Natural killer cell (primary cell): ENCODE measurements at regions of chr5 and their contacts with region 1.

Region 1: DNA sequence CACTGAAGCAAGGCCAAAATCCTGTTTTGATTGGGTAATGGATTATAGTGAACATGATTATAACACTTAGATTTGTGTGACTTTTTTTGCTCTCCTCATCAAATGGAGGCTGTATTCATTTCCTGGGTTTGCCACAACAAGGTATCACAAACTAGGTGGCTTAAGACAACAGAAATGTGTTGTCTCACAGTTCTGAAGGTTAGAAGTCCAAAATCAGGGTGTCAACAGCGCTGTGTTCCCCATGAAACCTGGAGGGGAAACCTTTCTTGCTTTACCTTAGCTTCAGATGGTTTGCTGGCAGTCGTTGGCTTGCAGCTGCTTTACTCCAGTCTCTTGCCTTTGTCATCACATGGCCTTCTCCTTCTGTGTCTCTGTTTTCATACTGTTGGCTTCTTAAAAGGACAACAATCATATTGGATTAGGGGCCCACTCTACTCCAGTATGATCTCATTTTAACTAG is 32.4 kb downstream of the CDC42SE2 start:
- DNase-seq: peak in 1 of 2 donors; percentile 64
- ATAC-seq: peak; percentile 80 to 87 (median 82)
- H3K4me3 ChIP-seq: no peak overlapping the region
- H3K4me3 Mint-ChIP-seq: peak overlapping the region; percentile 68
- H3K27ac ChIP-seq: peak overlapping the region; percentile 41
- H3K27ac Mint-ChIP-seq: peak overlapping the region; percentile 86 to 90
- H3K4me1 ChIP-seq: peaks cover 40% of the 10 kb centered on the region
- H3K4me1 Mint-ChIP-seq: peaks cover 54 to 59% of the 10 kb centered on the region in 2 donors
- H3K27me3 ChIP-seq: no peaks in the 10 kb centered on the region
- H3K27me3 Mint-ChIP-seq: no peaks in the 10 kb centered on the region
- CTCF ChIP-seq: no peak

Region 2: DNA sequence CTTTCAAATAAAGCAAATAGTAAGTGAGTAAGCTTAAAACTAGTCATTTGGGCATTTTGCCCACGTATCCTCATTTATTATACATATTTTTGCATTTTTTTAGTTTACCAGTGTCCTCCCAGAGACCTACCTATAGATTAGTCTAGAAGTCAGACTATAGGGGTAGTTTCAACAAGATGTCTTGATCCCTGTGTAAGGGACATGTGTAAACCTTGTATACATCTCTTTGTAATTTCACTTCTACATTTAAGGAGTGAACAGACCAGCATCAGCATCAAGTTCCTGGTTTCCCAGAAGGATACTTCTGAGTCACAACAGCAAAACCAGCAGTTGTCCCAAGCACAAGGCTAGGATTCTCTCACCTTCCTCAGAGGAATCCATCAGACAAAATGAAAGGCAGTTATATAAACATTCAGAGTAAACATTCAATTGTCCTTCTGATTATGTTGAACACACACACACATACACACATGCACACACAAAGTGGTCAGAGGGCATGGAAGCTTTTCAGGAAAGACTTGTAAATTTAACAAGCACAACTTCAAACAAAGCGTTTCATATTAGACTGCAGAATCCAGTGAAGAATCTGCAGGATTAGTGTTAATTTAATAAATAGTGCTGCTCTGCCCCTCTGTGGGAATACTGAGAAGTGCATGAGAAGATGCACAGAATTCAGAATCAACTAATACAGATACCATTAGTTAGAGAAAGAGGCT is 186.5 kb before region 1 on chr5:
- intact Hi-C with region 1: no loop called
- DNase-seq: peak in 1 of 2 donors; percentile 68
- ATAC-seq: peak; percentile 62 to 80 (median 73)
- H3K4me3 ChIP-seq: no peak overlapping the region
- H3K4me3 Mint-ChIP-seq: no peak overlapping the region
- H3K27ac ChIP-seq: no peak overlapping the region
- H3K27ac Mint-ChIP-seq: no peak overlapping the region
- H3K4me1 ChIP-seq: no peaks in the 10 kb centered on the region
- H3K4me1 Mint-ChIP-seq: no peaks in the 10 kb centered on the region
- H3K27me3 ChIP-seq: no peaks in the 10 kb centered on the region
- H3K27me3 Mint-ChIP-seq: no peaks in the 10 kb centered on the region
- CTCF ChIP-seq: peak; percentile 86

Region 3: DNA sequence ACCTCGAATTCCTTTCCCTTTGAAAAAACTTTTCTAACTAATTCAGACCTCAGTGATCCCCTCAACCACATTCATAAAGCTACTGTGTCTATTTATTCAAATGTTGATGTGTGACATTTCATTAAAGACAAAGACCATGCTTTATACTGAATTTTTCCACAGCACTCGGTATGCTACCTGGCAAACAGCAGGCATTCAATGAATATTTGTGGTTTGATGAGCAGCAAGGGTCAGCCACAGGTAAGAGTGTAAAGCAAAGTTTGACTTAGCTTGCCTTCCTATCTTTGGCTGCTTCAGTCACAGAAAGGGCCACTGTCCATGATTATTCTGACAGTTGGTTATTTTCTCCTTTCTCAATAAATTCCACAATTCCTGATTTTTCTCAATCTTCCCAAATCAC is 37.5 kb before region 1 on chr5:
- intact Hi-C with region 1: loop called (anchors 5 kb)
- DNase-seq: no peak
- ATAC-seq: no peak
- H3K4me3 ChIP-seq: no peak overlapping the region
- H3K4me3 Mint-ChIP-seq: peak overlapping the region; percentile 86
- H3K27ac ChIP-seq: peak overlapping the region; percentile 92
- H3K27ac Mint-ChIP-seq: peak overlapping the region; percentile 89 to 95
- H3K4me1 ChIP-seq: peaks cover 49% of the 10 kb centered on the region
- H3K4me1 Mint-ChIP-seq: peaks cover 54 to 64% of the 10 kb centered on the region in 2 donors
- H3K27me3 ChIP-seq: no peaks in the 10 kb centered on the region
- H3K27me3 Mint-ChIP-seq: no peaks in the 10 kb centered on the region
- CTCF ChIP-seq: no peak